ENCODE measurements at regions of chr17 and their contacts with region 1.

Region 1: DNA sequence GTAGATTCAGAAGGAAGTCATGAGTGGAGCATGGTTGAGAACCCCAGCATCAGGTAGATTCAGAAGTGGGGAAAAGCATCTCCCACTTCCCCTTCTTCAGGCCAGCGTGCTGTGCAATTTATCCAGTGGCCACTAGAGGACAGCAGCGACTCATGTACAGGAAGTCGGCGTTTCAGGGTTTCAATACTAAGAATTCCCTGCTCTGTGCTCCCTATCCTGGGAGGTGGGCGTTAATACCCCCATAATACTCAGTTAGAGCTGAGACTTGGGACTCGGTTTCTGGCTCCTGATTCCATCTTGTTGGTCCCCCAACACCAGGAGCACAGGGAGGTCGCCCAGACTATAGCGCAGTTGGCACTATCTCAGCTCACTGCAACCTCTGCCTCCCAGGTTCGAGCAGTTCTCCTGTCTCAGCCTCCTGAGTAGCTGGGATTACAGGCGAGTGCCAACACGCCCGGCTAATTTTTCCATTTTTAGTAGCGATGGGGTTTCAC is 75.3 kb upstream of the AMZ2 start:
- DNase-seq: peak; percentile 54 to 85 (median 80)
- ATAC-seq: peak; percentile 81
- H3K4me3 ChIP-seq: no peak overlapping the region
- H3K4me3 Mint-ChIP-seq: no peak overlapping the region
- H3K27ac ChIP-seq: no peak overlapping the region
- H3K27ac Mint-ChIP-seq: no peak overlapping the region
- H3K4me1 ChIP-seq: peaks cover 19% of the 10 kb centered on the region
- H3K4me1 Mint-ChIP-seq: peaks cover 37% of the 10 kb centered on the region
- H3K27me3 ChIP-seq: no peaks in the 10 kb centered on the region
- H3K27me3 Mint-ChIP-seq: no peaks in the 10 kb centered on the region
- CTCF ChIP-seq: peak; percentile 99

Region 2: DNA sequence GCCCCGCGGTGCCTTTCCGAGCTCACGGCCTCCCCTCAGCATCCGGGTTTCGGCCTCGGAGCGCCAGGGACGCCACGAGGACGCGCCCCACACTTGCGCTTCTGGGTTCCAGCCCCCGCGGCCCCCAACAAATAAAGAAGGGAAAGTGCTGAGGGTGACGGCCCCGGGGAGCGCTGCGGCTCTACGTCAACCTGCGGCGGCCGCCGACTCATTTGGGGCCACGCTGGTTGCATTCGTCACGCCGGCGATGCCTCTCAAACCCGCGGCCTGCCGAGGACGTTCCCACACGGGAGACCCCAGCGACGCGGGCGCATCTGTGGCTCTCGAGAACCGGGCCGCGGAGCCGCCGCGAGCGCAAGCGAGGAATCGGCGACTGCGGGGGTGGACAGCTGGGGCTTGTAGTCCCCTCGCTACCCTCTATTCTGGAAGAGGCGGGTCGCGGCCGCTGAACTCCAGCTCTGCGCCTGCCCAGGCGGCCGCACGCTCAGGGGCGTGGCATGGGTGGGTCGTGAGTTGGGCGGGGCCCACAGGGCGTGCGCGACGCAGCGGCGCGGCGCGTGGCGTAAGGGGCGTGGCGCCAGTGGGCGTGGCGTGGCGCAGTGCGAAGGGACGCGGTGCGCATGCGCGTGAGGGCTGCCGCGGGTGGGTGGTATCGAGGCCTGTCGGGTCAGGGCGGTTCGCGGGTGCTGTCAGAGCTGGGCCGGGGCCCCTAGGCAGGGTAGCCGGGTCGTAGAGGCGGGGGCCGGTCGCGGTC is 75.1 kb after region 1 on chr17 and contains the start of gene AMZ2:
- CTCF ChIA-PET with region 1: interaction called, 11 read pairs
- POLR2A ChIA-PET with region 1: interaction called, 3 read pairs
- intact Hi-C with region 1: no loop called
- DNase-seq: peak; percentile 94 to 99 (median 98)
- ATAC-seq: peak; percentile 91
- H3K4me3 ChIP-seq: peak within 1 kb of the TSS; percentile 70 to 94
- H3K4me3 Mint-ChIP-seq: peak within 1 kb of the TSS; percentile 96
- H3K27ac ChIP-seq: peak within 1 kb of the TSS; percentile 93 to 96
- H3K27ac Mint-ChIP-seq: peak within 1 kb of the TSS; percentile 98
- H3K4me1 ChIP-seq: peaks cover 34% of the 10 kb centered on the region
- H3K4me1 Mint-ChIP-seq: peaks cover 42% of the 10 kb centered on the region
- H3K27me3 ChIP-seq: no peaks in the 10 kb centered on the region
- H3K27me3 Mint-ChIP-seq: no peaks in the 10 kb centered on the region
- CTCF ChIP-seq: no peak
- total RNA-seq, gene AMZ2: 61.0 to 71.1 TPM

Region 3: GRCh38 chr17:68255731-68256538 is 83.4 kb after region 1 on chr17:
- CTCF ChIA-PET with region 1: interaction called, 13 read pairs
- POLR2A ChIA-PET with region 1: no interaction called
- intact Hi-C with region 1: loop called in 1 of 2 experiments (anchors 5 kb)
- DNase-seq: peak in 3 of 9 experiments; percentile 33 to 74 (median 58)
- ATAC-seq: peak; percentile 22
- H3K4me3 ChIP-seq: no peak overlapping the region
- H3K4me3 Mint-ChIP-seq: peak overlapping the region; percentile 24
- H3K27ac ChIP-seq: peak overlapping the region; percentile 34 to 97
- H3K27ac Mint-ChIP-seq: peak overlapping the region; percentile 97
- H3K4me1 ChIP-seq: peaks cover 76% of the 10 kb centered on the region
- H3K4me1 Mint-ChIP-seq: peaks cover 82% of the 10 kb centered on the region
- H3K27me3 ChIP-seq: no peaks in the 10 kb centered on the region
- H3K27me3 Mint-ChIP-seq: no peaks in the 10 kb centered on the region
- CTCF ChIP-seq: no peak

Measured in CD8-positive, alpha-beta T cell (primary cell).